ENCODE measurements at regions of chr6 and their contacts with region 1.

Region 1: GRCh38 chr6:121055572-121056163 is 278.6 kb downstream of the TBC1D32 start:
- DNase-seq: peak; percentile 78
- ATAC-seq: peak; percentile 78
- H3K4me3 ChIP-seq: no peak overlapping the region
- H3K27ac ChIP-seq: no peak overlapping the region
- H3K4me1 ChIP-seq: no peaks in the 10 kb centered on the region
- H3K27me3 ChIP-seq: no peaks in the 10 kb centered on the region
- CTCF ChIP-seq: peak; percentile 74

Region 2: DNA sequence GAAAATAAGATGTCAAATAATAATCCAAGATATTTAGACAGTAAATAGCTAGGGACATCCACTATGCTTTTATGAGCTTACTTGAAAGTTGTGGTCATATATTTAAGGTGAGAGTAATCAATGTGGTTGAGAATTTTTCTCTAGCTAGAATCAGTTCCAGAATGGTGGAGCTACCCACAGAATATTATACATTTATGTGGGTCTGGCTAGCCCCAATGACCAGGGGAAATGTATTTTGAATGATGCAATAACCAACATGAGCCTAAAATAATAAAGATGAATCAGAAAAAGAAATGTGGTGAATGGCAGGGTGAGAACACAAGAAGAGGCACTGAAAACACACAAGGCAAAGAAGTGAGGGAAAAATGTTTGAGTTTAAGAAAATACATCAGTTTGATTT is 47.1 kb before region 1 on chr6:
- CTCF ChIA-PET with region 1: no interaction called
- POLR2A ChIA-PET with region 1: no interaction called
- intact Hi-C with region 1: no loop called
- DNase-seq: no peak
- ATAC-seq: no peak
- H3K4me3 ChIP-seq: no peak overlapping the region
- H3K27ac ChIP-seq: no peak overlapping the region
- H3K4me1 ChIP-seq: no peaks in the 10 kb centered on the region
- H3K27me3 ChIP-seq: no peaks in the 10 kb centered on the region
- CTCF ChIP-seq: no peak

Region 3: GRCh38 chr6:121032268-121033006 is 23.2 kb before region 1 on chr6:
- CTCF ChIA-PET with region 1: no interaction called
- POLR2A ChIA-PET with region 1: no interaction called
- intact Hi-C with region 1: no loop called
- DNase-seq: no peak
- ATAC-seq: no peak
- H3K4me3 ChIP-seq: no peak overlapping the region
- H3K27ac ChIP-seq: no peak overlapping the region
- H3K4me1 ChIP-seq: no peaks in the 10 kb centered on the region
- H3K27me3 ChIP-seq: no peaks in the 10 kb centered on the region
- CTCF ChIP-seq: no peak

Region 4: GRCh38 chr6:121093928-121094327 is 38.3 kb after region 1 on chr6:
- CTCF ChIA-PET with region 1: no interaction called
- POLR2A ChIA-PET with region 1: no interaction called
- intact Hi-C with region 1: no loop called
- DNase-seq: no peak
- ATAC-seq: no peak
- H3K4me3 ChIP-seq: no peak overlapping the region
- H3K27ac ChIP-seq: no peak overlapping the region
- H3K4me1 ChIP-seq: no peaks in the 10 kb centered on the region
- H3K27me3 ChIP-seq: no peaks in the 10 kb centered on the region
- CTCF ChIP-seq: no peak

Region 5: GRCh38 chr6:121305957-121306607 is 250.4 kb after region 1 on chr6:
- CTCF ChIA-PET with region 1: interaction called, 3 read pairs
- POLR2A ChIA-PET with region 1: no interaction called
- intact Hi-C with region 1: loop called (anchors 1 kb)
- DNase-seq: peak; percentile 50
- ATAC-seq: peak; percentile 61
- H3K4me3 ChIP-seq: no peak overlapping the region
- H3K27ac ChIP-seq: no peak overlapping the region
- H3K4me1 ChIP-seq: no peaks in the 10 kb centered on the region
- H3K27me3 ChIP-seq: no peaks in the 10 kb centered on the region
- CTCF ChIP-seq: peak; percentile 57

Region 6: GRCh38 chr6:121399966-121400365 is 344.3 kb after region 1 on chr6:
- CTCF ChIA-PET with region 1: no interaction called
- POLR2A ChIA-PET with region 1: no interaction called
- intact Hi-C with region 1: loop called (anchors 2 kb)
- DNase-seq: no peak
- ATAC-seq: no peak
- H3K4me3 ChIP-seq: no peak overlapping the region
- H3K27ac ChIP-seq: no peak overlapping the region
- H3K4me1 ChIP-seq: no peaks in the 10 kb centered on the region
- H3K27me3 ChIP-seq: no peaks in the 10 kb centered on the region
- CTCF ChIP-seq: no peak